Activated CD4-positive, alpha-beta T cell treated with anti-CD3 and anti-CD28 coated beads, Interleukin-2, amount 10 ng/mL, durations not matched to agents 24 days and 14 days (primary cell): ENCODE measurements at regions of chr19 and their contacts with region 1.

Region 1: GRCh38 chr19:33771384-33772101 is 25.1 kb upstream of the KCTD15 start:
- DNase-seq: peak; percentile 91
- H3K4me3 Mint-ChIP-seq: no peak overlapping the region
- H3K27ac Mint-ChIP-seq: no peak overlapping the region
- H3K4me1 Mint-ChIP-seq: peaks cover 6% of the 10 kb centered on the region
- H3K27me3 Mint-ChIP-seq: no peaks in the 10 kb centered on the region

Region 2: GRCh38 chr19:33373701-33374421 is 397.7 kb before region 1 on chr19 and contains the start of gene CEBPG:
- intact Hi-C with region 1: no loop called
- DNase-seq: peak; percentile 88
- H3K4me3 Mint-ChIP-seq: peak within 1 kb of the TSS; percentile 94
- H3K27ac Mint-ChIP-seq: peak within 1 kb of the TSS; percentile 80
- H3K4me1 Mint-ChIP-seq: peaks cover 39% of the 10 kb centered on the region
- H3K27me3 Mint-ChIP-seq: no peaks in the 10 kb centered on the region
- total RNA-seq, gene CEBPG: 29.7 and 29.8 TPM in 2 replicates

Region 3: GRCh38 chr19:33416307-33417215 is 355.0 kb before region 1 on chr19:
- intact Hi-C with region 1: loop called (anchors 5 kb)
- DNase-seq: peak; percentile 88
- H3K4me3 Mint-ChIP-seq: peak overlapping the region; percentile 61
- H3K27ac Mint-ChIP-seq: no peak overlapping the region
- H3K4me1 Mint-ChIP-seq: peaks cover 3% of the 10 kb centered on the region
- H3K27me3 Mint-ChIP-seq: no peaks in the 10 kb centered on the region

Region 4: GRCh38 chr19:33430674-33431277 is 340.8 kb before region 1 on chr19:
- intact Hi-C with region 1: loop called (anchors 1 kb)
- DNase-seq: peak; percentile 88
- H3K4me3 Mint-ChIP-seq: no peak overlapping the region
- H3K27ac Mint-ChIP-seq: no peak overlapping the region
- H3K4me1 Mint-ChIP-seq: no peaks in the 10 kb centered on the region
- H3K27me3 Mint-ChIP-seq: peaks cover 2% of the 10 kb centered on the region